Heart right ventricle (tissue), 16 donors: ENCODE measurements at regions of chr15 and their contacts with region 1.

Region 1: GRCh38 chr15:24933716-24934115 is 21.1 kb upstream of the SNRPN start:
- DNase-seq: peak in 1 of 2 donors; percentile 13
- ATAC-seq: peak; percentile 42 to 90 (median 84)
- H3K4me3 ChIP-seq: no peak overlapping the region
- H3K27ac ChIP-seq: peak overlapping the region in 6 of 10 donors; percentile 13 to 75 (median 72)
- H3K4me1 ChIP-seq: peaks cover 0 to 5% (median 0%) of the 10 kb centered on the region in 9 donors
- H3K27me3 ChIP-seq: no peaks in the 10 kb centered on the region
- CTCF ChIP-seq: no peak

Region 2: DNA sequence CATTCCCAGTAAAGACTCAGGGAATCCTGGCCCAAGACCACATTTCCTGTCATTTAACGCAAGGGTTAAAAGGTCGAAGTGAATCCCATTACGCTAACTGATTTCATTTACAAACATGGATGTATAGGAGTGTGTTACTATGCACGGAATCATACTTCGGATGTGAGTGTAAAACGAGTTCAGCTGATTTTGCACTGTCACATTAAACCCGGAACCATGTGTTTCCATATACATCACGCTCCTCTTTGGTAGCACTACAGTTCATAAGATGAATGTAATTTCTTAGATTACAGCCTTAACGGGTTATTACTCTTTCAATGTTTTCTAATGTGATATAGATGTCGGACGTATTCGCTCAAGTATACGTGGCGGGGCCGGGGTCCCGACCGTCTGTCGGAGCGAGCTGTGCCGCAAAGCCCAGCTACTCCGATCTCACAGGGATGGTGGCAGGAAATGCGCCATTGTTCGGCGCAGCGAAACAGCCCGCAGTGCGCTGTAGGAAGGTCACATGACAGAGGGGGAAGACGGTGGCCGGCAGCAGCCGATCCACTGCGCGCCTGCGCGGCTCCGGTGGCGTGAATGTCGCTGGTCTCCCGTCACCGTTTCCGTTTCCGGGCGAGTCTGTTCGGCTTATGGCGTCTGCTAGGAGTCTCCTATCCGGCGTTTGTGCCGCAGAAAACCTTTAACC is 160.9 kb before region 1 on chr15:
- intact Hi-C with region 1: no loop called
- DNase-seq: peak; percentile 69 to 70
- ATAC-seq: peak; percentile 95 to 99 (median 98)
- H3K4me3 ChIP-seq: peak overlapping the region in 9 of 10 donors; percentile 20 to 55 (median 46)
- H3K27ac ChIP-seq: peak overlapping the region in 5 of 10 donors; percentile 31 to 53 (median 49)
- H3K4me1 ChIP-seq: no peaks in the 10 kb centered on the region
- H3K27me3 ChIP-seq: peaks cover 0 to 43% (median 4%) of the 10 kb centered on the region in 7 donors
- CTCF ChIP-seq: no peak

Region 3: DNA sequence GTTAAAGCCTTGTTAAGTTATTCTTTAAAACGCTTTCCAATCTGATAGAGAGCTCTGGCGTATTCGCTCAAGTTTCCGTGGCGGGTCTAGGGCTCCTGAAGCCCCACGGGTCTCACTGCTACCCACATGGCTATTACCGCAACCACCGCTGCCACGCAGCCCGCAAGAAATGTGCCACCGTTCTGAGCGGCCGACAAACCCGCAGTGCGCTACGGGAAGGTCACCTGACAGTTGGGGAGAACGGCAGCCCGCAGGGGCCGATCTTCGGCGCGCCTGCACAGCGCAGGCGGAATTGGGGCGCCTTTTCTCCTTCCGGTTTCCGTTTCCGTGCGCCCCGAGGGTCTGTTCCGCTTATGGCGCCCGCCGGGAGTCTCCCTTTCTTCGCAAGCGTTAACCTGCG is 55.6 kb before region 1 on chr15:
- intact Hi-C with region 1: loop called in 1 of 10 experiments (anchors 10 kb)
- DNase-seq: peak; percentile 15 to 28
- ATAC-seq: peak in 4 of 8 donors; percentile 76 to 87 (median 83)
- H3K4me3 ChIP-seq: peak overlapping the region in 8 of 10 donors; percentile 13 to 54 (median 38)
- H3K27ac ChIP-seq: no peak overlapping the region
- H3K4me1 ChIP-seq: no peaks in the 10 kb centered on the region
- H3K27me3 ChIP-seq: no peaks in the 10 kb centered on the region
- CTCF ChIP-seq: no peak